ENCODE measurements at regions of chr1 and their contacts with region 1.

Region 1: GRCh38 chr1:155167166-155168104 is 5.7 kb downstream of the KRTCAP2 start:
- DNase-seq: peak; percentile 95
- ATAC-seq: peak; percentile 75
- H3K4me3 Mint-ChIP-seq: peak overlapping the region; percentile 89
- H3K27ac Mint-ChIP-seq: peak overlapping the region; percentile 90
- H3K4me1 Mint-ChIP-seq: peaks cover 24% of the 10 kb centered on the region
- H3K27me3 Mint-ChIP-seq: no peaks in the 10 kb centered on the region; the same call in 1 of the 2 replicates
- CTCF ChIP-seq: peak; percentile 94

Region 2: DNA sequence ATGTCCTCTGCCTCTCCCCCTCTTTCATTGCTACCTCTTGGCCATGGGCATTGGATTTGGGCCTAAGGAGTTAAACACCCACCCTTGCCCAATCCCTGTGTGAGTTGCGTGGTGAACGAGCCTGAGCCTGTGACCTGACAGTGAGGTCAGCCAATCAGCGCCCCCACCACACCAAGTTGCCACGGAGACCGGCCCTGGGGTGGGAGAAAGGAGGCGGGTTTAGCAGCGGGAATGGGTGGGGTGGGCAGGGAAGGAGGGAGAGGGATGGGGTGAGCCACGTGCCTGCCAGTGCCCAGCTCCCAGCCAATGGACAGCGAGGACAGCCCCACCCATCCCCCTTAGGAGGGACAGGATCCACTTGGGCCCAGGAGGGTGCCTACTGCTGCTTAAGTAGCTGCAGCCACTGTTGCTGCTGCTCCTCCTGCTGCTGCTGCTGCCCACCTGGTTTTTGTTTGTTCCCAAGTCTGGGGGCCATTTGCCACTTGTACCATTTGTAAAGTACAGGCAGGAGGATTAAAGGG is 155.3 kb before region 1 on chr1:
- CTCF ChIA-PET with region 1: interaction called, 15 read pairs
- POLR2A ChIA-PET with region 1: no interaction called
- DNase-seq: peak; percentile 88
- ATAC-seq: peak; percentile 78
- H3K4me3 Mint-ChIP-seq: peak overlapping the region; percentile 45
- H3K27ac Mint-ChIP-seq: peak overlapping the region; percentile 95
- H3K4me1 Mint-ChIP-seq: peaks cover 49% of the 10 kb centered on the region
- H3K27me3 Mint-ChIP-seq: no peaks in the 10 kb centered on the region
- CTCF ChIP-seq: no peak

Region 3: DNA sequence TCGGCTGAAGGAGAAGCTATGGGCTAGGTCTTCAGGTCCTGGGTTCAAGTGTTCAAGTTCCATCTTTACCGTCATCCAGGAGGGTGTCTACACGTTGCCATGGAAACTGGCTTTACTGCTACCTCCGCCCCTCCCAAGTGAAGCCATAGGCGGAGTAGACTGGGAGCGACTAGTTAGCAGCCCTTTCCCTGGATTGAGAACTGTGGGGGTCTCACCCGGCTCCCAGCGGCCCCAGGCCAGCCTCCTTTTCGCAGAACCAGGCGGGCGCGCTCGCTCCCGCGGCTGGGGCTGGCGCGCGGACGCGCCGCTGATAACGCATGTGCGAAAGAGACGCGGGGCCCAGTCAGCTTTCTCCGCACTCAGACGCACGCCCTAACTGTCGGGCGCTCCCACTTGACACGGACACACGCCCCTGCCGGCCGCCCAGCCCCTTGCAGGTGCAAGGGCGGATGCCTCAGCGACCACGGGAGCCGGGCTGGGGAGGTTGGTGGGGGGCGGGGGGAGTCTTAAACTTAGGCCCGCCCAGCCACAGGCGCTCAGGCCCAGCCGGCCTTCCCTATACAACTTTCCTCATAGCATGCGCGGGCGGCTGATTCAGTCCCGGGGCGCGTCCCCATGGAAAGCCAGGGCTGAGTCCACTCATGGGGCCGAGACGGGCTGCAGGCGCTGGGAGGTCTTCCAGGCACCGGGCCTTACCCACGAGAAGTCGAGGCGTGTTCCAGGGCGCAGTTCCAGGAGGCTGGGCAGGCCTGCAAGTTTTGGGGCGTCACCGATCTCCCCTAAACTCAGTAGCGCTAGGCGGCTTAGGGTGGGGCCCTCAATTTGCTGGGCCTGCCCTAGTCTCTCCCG is 96.5 kb before region 1 on chr1:
- CTCF ChIA-PET with region 1: interaction called, 57 read pairs
- POLR2A ChIA-PET with region 1: no interaction called
- DNase-seq: peak; percentile 94
- ATAC-seq: peak; percentile 78
- H3K4me3 Mint-ChIP-seq: peak overlapping the region; percentile 75
- H3K27ac Mint-ChIP-seq: no peak overlapping the region
- H3K4me1 Mint-ChIP-seq: peaks cover 41% of the 10 kb centered on the region
- H3K27me3 Mint-ChIP-seq: peaks cover 33% of the 10 kb centered on the region
- CTCF ChIP-seq: peak; percentile 52; the same call in 1 of the 2 replicates

Region 4: DNA sequence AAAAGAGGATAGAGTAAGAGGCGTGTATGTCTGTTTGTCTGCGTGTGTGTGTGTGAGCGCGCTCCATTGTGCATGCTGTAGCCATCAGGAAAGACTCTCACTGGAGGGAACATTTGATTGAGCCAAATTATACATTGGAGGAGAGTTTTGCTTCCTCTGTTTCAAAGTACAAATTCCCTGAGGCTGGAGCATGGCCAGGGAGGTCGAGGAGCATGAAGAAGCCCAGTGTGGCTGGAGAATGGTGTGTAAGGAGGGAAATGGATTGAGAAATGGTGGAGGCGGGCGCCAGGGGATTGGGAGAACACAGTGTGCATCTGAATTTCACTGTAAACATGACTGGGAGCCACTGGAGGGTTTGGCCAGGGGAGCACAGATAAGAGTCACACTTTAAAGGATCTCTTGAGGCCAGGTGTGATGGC is 61.8 kb before region 1 on chr1:
- CTCF ChIA-PET with region 1: interaction called, 115 read pairs
- POLR2A ChIA-PET with region 1: no interaction called
- DNase-seq: no peak
- ATAC-seq: no peak
- H3K4me3 Mint-ChIP-seq: no peak overlapping the region
- H3K27ac Mint-ChIP-seq: peak overlapping the region; percentile 2; the same call in 1 of the 2 replicates
- H3K4me1 Mint-ChIP-seq: no peaks in the 10 kb centered on the region
- H3K27me3 Mint-ChIP-seq: peaks cover 14% of the 10 kb centered on the region
- CTCF ChIP-seq: no peak

Region 5: GRCh38 chr1:155135415-155136028 is 31.9 kb before region 1 on chr1 and contains the start of gene SLC50A1:
- CTCF ChIA-PET with region 1: interaction called, 164 read pairs
- POLR2A ChIA-PET with region 1: interaction called, 4 read pairs
- DNase-seq: peak; percentile 97
- ATAC-seq: peak; percentile 87
- H3K4me3 Mint-ChIP-seq: peak within 1 kb of the TSS; percentile 96
- H3K27ac Mint-ChIP-seq: peak within 1 kb of the TSS; percentile 96
- H3K4me1 Mint-ChIP-seq: peaks cover 21% of the 10 kb centered on the region
- H3K27me3 Mint-ChIP-seq: peaks cover under 1% of the 10 kb centered on the region; the same call in 1 of the 2 replicates
- CTCF ChIP-seq: no peak
- total RNA-seq, gene SLC50A1: 39.0 to 47.8 TPM (median 46.0 TPM) in 3 replicates

Region 6: DNA sequence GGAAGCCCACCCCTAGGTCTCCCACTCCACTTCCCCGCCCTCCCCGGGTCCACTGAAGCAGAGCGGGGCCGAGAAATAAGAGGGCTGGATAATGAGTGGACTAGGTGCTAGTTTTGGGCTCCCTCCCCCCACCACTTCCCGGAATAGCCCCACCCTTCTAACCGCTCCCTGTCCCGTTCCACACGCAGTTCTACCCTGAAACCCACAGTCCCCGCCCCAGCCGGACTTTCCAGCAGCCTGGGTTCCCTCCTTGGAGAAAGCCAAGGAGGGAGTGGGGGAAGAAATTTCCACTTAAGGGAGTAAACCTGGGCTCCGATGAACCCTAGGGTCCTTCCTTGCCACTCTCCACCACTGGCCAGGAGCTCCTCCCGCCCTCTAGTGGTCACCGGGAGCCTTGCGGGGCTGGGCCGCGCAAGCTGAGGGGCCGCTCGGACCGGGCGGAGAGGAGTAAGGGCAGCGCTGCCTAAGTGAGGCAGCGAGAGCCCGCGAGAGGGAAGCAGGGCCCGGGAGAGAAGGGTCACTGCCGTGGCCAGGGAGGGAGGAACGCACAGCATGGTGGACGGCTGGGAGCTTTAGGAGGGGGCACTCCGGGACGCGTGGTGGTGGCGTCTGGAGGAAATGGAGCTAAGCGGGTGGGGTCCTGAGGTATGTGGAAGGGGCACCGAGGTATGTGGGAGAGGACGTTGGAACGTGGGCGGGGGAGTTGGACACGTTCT is 26.0 kb after region 1 on chr1:
- CTCF ChIA-PET with region 1: interaction called, 232 read pairs
- POLR2A ChIA-PET with region 1: interaction called, 83 read pairs
- DNase-seq: peak; percentile 97
- ATAC-seq: peak; percentile 67
- H3K4me3 Mint-ChIP-seq: peak overlapping the region; percentile 99
- H3K27ac Mint-ChIP-seq: peak overlapping the region; percentile 99
- H3K4me1 Mint-ChIP-seq: peaks cover 34% of the 10 kb centered on the region
- H3K27me3 Mint-ChIP-seq: peaks cover 4% of the 10 kb centered on the region; the same call in 1 of the 2 replicates
- CTCF ChIP-seq: peak; percentile 98

Region 7: DNA sequence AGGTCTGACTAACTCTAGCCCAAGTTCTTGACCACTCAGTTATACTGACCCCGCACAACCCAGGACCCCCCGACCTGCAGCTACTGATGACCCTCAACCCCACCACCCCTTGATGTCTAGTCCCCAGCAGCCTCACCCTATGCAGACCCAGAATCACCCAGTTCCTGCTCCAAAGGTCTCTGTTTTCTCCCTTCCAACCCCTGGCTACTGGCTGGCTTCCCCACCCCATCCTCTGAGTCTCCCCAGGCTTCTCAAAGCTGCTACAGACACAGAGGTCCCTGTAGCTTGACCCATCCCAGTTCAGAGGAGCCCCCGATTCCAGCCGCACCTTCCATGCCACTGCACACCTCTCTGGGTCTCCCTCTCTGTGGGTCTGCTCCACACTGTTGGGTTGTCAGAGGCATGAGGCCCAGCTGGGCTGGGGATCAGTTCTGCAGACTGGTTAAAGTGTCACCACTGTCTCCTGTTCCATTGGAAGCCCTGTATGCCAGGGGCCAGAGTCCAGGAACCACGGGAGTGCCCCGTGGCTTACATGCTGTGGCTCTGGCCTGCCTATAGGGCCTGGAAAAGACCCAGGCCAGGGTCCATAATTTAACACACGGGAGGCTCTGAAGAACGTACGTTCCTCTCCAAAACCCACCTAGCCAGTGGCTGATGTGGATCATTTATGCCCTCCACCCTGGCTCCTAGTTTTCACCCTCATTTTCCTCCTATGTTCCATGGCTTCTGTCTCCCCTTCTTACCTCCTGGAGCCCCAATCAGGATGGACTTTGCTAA is 133.3 kb after region 1 on chr1:
- CTCF ChIA-PET with region 1: no interaction called
- POLR2A ChIA-PET with region 1: no interaction called
- DNase-seq: no peak
- ATAC-seq: no peak
- H3K4me3 Mint-ChIP-seq: no peak overlapping the region
- H3K27ac Mint-ChIP-seq: no peak overlapping the region
- H3K4me1 Mint-ChIP-seq: peaks cover 24% of the 10 kb centered on the region
- H3K27me3 Mint-ChIP-seq: peaks cover 19% of the 10 kb centered on the region
- CTCF ChIP-seq: no peak

Region 8: GRCh38 chr1:155339515-155340097 is 172.2 kb after region 1 on chr1:
- CTCF ChIA-PET with region 1: no interaction called
- POLR2A ChIA-PET with region 1: no interaction called
- DNase-seq: no peak
- ATAC-seq: no peak
- H3K4me3 Mint-ChIP-seq: no peak overlapping the region
- H3K27ac Mint-ChIP-seq: no peak overlapping the region
- H3K4me1 Mint-ChIP-seq: no peaks in the 10 kb centered on the region
- H3K27me3 Mint-ChIP-seq: no peaks in the 10 kb centered on the region
- CTCF ChIP-seq: no peak

Measured in WTC11 (cell line).